Natural killer cell (primary cell): ENCODE measurements at regions of chr10 and their contacts with region 1.

Region 1: DNA sequence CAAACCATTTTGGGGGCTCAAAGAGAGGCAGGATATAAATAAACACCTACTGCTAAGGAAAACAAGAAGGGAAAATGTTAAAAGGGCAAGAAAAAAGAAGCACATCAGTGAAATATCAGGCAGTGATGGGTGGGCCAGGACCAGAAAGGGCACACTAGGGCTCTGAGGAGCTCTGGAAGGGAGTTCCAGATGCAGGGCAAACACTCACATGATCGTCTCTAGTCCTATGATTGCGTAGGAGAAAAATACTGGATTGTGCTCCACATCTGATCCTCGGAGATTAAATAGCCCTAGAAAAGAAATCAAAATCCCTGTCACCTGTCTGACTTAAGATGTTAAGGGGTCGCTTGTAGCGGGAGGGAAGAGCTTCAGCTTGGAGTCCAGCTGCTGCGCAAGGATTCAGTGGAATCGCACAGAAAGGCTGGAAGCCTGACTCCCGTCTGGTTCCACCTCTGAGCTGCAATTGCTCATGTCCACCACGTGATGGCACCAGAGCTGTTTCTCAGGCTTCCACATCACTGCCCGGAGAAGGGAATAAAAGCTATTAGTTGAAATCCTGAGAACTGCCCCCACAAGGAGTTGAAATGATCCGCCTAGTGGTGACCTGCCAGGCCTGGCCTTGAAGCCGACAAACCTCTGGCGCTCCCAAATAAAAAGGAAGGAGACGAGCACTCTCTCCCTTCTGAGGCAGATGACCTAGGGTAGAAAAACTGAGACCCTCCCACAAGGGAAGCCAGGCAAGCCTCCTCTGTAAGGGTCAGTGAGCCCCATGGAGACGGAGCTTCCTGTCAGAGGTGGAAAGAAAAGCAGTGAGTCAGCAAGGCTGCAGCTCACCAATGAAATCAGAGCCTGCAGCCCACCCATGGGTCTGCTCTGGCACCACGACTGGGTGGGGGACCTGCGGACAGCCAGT is 39.2 kb downstream of the XPNPEP1 start:
- DNase-seq: peak; percentile 51 to 86
- ATAC-seq: peak; percentile 69 to 95 (median 93)
- H3K4me3 ChIP-seq: no peak overlapping the region
- H3K4me3 Mint-ChIP-seq: no peak overlapping the region
- H3K27ac ChIP-seq: no peak overlapping the region
- H3K27ac Mint-ChIP-seq: peak overlapping the region; percentile 20 to 62
- H3K4me1 ChIP-seq: peaks cover 8% of the 10 kb centered on the region
- H3K4me1 Mint-ChIP-seq: peaks cover 14 to 31% of the 10 kb centered on the region in 2 donors
- H3K27me3 ChIP-seq: no peaks in the 10 kb centered on the region
- H3K27me3 Mint-ChIP-seq: no peaks in the 10 kb centered on the region
- CTCF ChIP-seq: peak; percentile 93

Region 2: DNA sequence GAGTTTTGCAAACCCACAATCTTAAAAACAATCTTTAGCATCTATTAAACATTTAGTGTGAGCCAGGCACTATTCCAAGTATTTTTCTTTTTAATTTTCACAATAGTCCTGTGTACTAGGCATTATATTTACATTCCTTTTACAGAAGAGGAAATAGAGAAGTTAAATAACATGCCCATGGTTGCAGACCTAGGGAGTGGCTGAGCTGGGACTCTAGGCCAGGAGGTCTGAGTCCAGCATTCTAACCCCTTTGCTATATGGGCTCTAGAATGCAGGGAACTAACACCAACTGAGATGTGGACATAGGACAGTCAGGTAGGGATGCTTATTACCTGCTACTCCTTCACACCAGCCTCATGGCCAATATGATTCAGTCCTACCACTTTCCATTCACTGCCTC is 204.6 kb before region 1 on chr10:
- intact Hi-C with region 1: no loop called
- DNase-seq: no peak
- ATAC-seq: no peak
- H3K4me3 ChIP-seq: no peak overlapping the region
- H3K4me3 Mint-ChIP-seq: no peak overlapping the region
- H3K27ac ChIP-seq: no peak overlapping the region
- H3K27ac Mint-ChIP-seq: no peak overlapping the region
- H3K4me1 ChIP-seq: no peaks in the 10 kb centered on the region
- H3K4me1 Mint-ChIP-seq: no peaks in the 10 kb centered on the region
- H3K27me3 ChIP-seq: no peaks in the 10 kb centered on the region
- H3K27me3 Mint-ChIP-seq: no peaks in the 10 kb centered on the region
- CTCF ChIP-seq: no peak

Region 3: DNA sequence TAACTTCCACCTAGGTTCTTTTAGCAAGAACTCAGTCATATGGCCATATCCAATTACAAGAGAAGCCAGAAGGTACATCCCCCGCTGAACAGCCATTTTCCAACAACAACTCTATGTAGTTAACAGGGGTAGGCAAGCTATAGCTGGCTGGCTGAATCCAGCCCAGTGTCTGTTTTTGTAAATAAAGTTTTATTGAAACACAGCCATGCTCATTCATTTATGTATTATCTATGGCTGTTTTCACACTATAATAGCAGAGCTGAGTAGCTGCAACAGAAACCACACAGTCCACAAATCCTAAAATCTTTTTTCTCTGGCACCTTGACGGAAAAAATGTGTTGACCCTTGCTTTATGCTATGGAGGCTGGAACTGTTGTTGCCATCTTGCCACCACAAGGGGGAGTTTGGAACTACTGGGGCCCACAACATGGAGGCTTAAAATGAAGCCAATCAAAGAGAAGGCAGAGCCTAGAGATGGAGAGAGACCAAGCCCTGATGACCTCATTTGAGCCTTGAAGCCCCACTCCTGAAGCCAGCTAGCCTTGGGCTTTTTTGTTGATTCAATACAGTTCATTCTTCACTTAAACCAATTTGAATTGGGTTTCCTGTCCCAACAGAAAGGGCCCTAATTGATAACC is 72.5 kb after region 1 on chr10:
- intact Hi-C with region 1: loop called (anchors 5 kb)
- DNase-seq: peak in 1 of 2 donors; percentile 59
- ATAC-seq: peak; percentile 52 to 70 (median 64)
- H3K4me3 ChIP-seq: no peak overlapping the region
- H3K4me3 Mint-ChIP-seq: no peak overlapping the region
- H3K27ac ChIP-seq: no peak overlapping the region
- H3K27ac Mint-ChIP-seq: no peak overlapping the region
- H3K4me1 ChIP-seq: no peaks in the 10 kb centered on the region
- H3K4me1 Mint-ChIP-seq: peaks cover 5 to 6% of the 10 kb centered on the region in 2 donors
- H3K27me3 ChIP-seq: no peaks in the 10 kb centered on the region
- H3K27me3 Mint-ChIP-seq: peaks cover 0 to 6% of the 10 kb centered on the region in 2 donors
- CTCF ChIP-seq: peak; percentile 19

Region 4: DNA sequence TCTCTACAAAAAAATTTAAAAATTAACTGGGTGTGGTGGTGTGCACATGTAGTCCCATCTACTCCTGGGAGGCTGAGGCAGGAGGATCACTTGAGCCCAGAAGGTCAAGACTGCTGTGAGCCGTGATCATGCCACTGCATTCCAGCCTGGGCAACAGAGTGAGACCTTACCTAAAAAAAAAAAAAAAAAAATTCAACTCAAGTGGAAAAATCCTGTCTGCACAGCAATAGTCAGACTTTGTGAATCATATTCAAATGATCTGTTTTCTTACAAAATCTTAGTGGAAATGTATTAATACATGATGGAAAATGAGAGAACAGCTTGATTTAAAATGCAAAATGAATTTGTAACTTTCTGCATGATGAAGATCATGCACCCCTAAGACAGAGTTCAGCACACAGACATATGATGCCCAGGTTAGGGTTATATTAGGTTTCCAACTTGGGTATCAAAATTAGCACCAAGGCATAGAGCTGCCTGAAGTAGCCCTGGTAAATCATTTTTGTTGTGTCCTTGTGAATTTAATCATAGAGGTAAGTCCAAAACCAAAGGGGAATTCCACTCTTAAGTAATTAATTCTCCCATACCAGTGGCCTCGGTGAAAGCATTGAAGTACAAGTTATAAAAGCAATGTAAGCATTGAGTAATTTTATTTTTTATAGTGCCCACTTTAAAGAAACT is 217.5 kb after region 1 on chr10:
- intact Hi-C with region 1: loop called (anchors 10 kb)
- DNase-seq: no peak
- ATAC-seq: no peak
- H3K4me3 ChIP-seq: no peak overlapping the region
- H3K4me3 Mint-ChIP-seq: no peak overlapping the region
- H3K27ac ChIP-seq: no peak overlapping the region
- H3K27ac Mint-ChIP-seq: peak overlapping the region; percentile 41 to 72
- H3K4me1 ChIP-seq: peaks cover 3% of the 10 kb centered on the region
- H3K4me1 Mint-ChIP-seq: peaks cover 35 to 70% of the 10 kb centered on the region in 2 donors
- H3K27me3 ChIP-seq: no peaks in the 10 kb centered on the region
- H3K27me3 Mint-ChIP-seq: no peaks in the 10 kb centered on the region
- CTCF ChIP-seq: no peak